Calu3 (cell line): ENCODE measurements at regions of chr18 and their contacts with region 1.

Region 1: DNA sequence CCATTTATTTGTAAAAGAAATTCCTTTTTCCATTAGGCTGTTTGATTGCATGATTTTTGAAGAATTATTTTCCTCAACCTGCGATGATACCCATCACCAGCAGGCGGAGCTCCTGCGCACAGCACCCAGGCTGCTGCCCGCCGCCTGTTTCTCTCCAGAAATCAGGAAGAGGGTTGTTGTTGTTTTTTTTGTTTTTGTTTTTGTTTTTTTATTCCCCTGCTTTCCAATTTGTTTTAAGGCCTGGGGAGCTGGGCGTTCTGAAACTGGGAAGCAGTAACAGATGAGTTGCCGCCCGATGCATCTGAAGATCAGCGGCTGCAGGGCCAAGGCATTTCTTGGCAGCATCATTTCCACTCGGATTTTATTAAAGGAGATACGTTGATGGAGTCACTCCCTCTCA is 132.1 kb downstream of the MBP start:
- DNase-seq: peak; percentile 82
- H3K4me3 Mint-ChIP-seq: no peak overlapping the region
- H3K27ac Mint-ChIP-seq: no peak overlapping the region
- H3K4me1 Mint-ChIP-seq: no peaks in the 10 kb centered on the region
- H3K27me3 Mint-ChIP-seq: no peaks in the 10 kb centered on the region
- CTCF ChIP-seq: peak; percentile 100

Region 2: GRCh38 chr18:77101410-77102258 is 101.1 kb after region 1 on chr18:
- CTCF ChIA-PET with region 1: no interaction called
- intact Hi-C with region 1: no loop called
- DNase-seq: peak; percentile 94
- H3K4me3 Mint-ChIP-seq: peak overlapping the region; percentile 57
- H3K27ac Mint-ChIP-seq: peak overlapping the region; percentile 94
- H3K4me1 Mint-ChIP-seq: peaks cover 81% of the 10 kb centered on the region
- H3K27me3 Mint-ChIP-seq: no peaks in the 10 kb centered on the region
- CTCF ChIP-seq: no peak

Region 3: GRCh38 chr18:77207540-77207939 is 207.0 kb after region 1 on chr18:
- CTCF ChIA-PET with region 1: interaction called, 36 read pairs
- intact Hi-C with region 1: loop called (anchors 1 kb)
- DNase-seq: peak; percentile 87
- H3K4me3 Mint-ChIP-seq: no peak overlapping the region
- H3K27ac Mint-ChIP-seq: no peak overlapping the region
- H3K4me1 Mint-ChIP-seq: peaks cover 20% of the 10 kb centered on the region
- H3K27me3 Mint-ChIP-seq: peaks cover 27% of the 10 kb centered on the region
- CTCF ChIP-seq: peak; percentile 98

Region 4: DNA sequence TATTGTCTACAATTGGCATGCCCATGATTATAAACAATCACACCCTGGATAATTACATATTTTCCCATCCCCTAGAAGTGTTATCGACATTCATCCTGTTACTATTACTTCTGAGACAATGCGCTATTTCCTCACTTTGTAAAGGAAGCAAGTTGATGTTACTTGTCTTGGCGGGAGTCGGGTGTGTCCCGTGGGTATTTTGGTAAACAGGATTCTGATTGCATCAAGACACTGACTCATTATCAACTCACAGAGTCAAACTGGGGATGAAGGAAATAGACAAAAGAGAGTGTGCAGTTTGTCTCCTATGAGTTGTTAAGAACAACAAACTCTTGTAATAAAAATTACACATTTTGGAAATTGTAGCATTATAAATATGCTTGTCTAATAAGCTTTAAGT is 391.8 kb after region 1 on chr18:
- CTCF ChIA-PET with region 1: no interaction called
- intact Hi-C with region 1: loop called (anchors 10 kb)
- DNase-seq: no peak
- H3K4me3 Mint-ChIP-seq: no peak overlapping the region
- H3K27ac Mint-ChIP-seq: no peak overlapping the region
- H3K4me1 Mint-ChIP-seq: no peaks in the 10 kb centered on the region
- H3K27me3 Mint-ChIP-seq: no peaks in the 10 kb centered on the region
- CTCF ChIP-seq: no peak